ENCODE measurements at regions of chr6 and their contacts with region 1.

Region 1: GRCh38 chr6:134063966-134064445 is 11.6 kb upstream of the SLC2A12 start:
- DNase-seq: peak; percentile 75
- ATAC-seq: peak; percentile 96
- H3K4me3 ChIP-seq: no peak overlapping the region
- H3K4me3 Mint-ChIP-seq: no peak overlapping the region
- H3K27ac ChIP-seq: no peak overlapping the region
- H3K27ac Mint-ChIP-seq: no peak overlapping the region
- H3K4me1 ChIP-seq: no peaks in the 10 kb centered on the region
- H3K4me1 Mint-ChIP-seq: no peaks in the 10 kb centered on the region
- H3K27me3 ChIP-seq: no peaks in the 10 kb centered on the region
- H3K27me3 Mint-ChIP-seq: no peaks in the 10 kb centered on the region
- CTCF ChIP-seq: peak; percentile 77

Region 2: DNA sequence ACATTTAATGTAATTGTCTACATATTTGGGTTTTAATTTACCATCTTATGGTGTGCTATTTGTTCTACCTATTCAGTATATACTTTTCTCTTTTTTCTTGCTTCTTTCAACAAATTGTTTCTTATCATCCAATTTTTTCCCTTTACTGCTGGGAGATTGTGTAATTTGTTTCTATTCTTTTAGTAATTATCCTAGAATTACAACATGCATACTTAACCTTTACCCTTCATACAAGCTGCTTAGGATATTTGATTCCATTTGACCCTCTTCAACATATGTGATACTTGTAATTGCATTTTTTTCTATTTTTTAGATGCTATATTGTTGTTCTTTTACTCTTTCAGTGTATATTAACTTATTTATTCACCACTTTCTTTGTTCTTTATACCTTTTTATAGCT is 126.1 kb before region 1 on chr6:
- CTCF ChIA-PET with region 1: interaction called, 11 read pairs
- POLR2A ChIA-PET with region 1: no interaction called
- intact Hi-C with region 1: no loop called
- DNase-seq: no peak
- ATAC-seq: no peak
- H3K4me3 ChIP-seq: no peak overlapping the region
- H3K4me3 Mint-ChIP-seq: no peak overlapping the region
- H3K27ac ChIP-seq: no peak overlapping the region
- H3K27ac Mint-ChIP-seq: no peak overlapping the region
- H3K4me1 ChIP-seq: no peaks in the 10 kb centered on the region
- H3K4me1 Mint-ChIP-seq: no peaks in the 10 kb centered on the region
- H3K27me3 ChIP-seq: peaks cover 0 to 11% (median 2%) of the 10 kb centered on the region in 4 experiments
- H3K27me3 Mint-ChIP-seq: peaks cover 30% of the 10 kb centered on the region
- CTCF ChIP-seq: no peak

Region 3: DNA sequence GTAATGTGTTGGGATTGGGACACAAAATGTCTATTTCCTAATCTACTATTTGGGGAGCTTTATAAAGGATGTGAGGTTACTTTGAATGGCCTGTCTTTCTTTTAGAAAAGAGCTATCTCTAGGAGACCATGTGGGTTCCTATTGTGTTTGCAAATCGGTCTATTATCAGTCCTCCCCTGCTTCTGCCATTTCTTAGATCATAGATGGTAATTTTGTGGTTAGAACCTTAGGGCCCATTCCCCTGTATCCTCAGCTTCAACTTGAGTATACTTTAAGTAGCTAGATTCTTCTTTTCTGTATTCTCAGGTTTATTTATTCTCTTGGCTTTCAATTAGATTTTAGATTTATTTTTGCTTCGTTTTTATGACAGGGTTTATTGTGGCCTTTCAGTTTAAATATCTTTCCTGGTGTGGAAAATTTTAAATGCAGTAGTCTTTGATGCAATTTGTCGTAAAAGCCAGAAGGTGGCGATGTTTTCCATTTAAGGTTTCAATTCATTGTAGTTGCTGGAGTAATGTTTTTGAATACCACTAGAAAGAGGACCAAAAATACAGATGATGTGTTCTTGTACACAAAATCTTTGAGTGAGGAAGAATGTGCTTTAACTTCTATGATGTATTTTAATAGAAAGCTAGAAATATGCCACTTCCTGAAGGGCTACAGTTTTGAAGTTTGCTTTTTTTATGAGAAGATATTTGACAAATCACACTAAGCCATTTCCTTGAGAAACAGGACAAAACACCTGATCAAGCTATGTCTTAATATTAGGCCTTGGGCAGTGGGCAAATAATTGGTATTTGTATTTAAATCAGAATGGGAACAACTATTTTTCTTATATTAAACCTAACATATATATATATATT is 90.7 kb before region 1 on chr6:
- CTCF ChIA-PET with region 1: interaction called, 41 read pairs
- POLR2A ChIA-PET with region 1: no interaction called
- intact Hi-C with region 1: loop called (anchors 1 kb)
- DNase-seq: peak; percentile 63
- ATAC-seq: peak; percentile 43
- H3K4me3 ChIP-seq: no peak overlapping the region
- H3K4me3 Mint-ChIP-seq: no peak overlapping the region
- H3K27ac ChIP-seq: no peak overlapping the region
- H3K27ac Mint-ChIP-seq: no peak overlapping the region
- H3K4me1 ChIP-seq: no peaks in the 10 kb centered on the region
- H3K4me1 Mint-ChIP-seq: peaks cover 27% of the 10 kb centered on the region
- H3K27me3 ChIP-seq: no peaks in the 10 kb centered on the region
- H3K27me3 Mint-ChIP-seq: no peaks in the 10 kb centered on the region
- CTCF ChIP-seq: peak; percentile 86

Region 4: DNA sequence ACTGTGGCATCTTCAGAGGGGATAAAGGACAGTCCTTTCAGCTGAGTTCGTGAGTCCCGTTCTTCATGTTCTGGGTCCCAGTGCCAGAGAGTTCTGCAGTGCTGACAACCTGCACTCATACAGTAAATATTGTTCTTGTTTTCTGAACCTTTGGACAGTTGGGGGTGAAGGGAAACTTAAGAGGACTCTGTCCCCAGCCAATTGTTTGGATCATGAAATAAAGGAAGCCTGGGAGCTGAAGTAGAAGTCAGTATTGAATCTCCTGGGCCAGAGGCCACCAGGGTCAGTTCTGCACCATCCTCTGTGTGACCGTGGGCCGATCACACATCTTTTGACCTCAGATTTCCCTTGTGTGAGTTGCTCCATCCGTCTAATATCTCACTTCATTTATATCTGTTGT is 14.8 kb before region 1 on chr6:
- CTCF ChIA-PET with region 1: interaction called, 35 read pairs
- POLR2A ChIA-PET with region 1: interaction called, 3 read pairs
- intact Hi-C with region 1: no loop called
- DNase-seq: no peak
- ATAC-seq: no peak
- H3K4me3 ChIP-seq: no peak overlapping the region
- H3K4me3 Mint-ChIP-seq: no peak overlapping the region
- H3K27ac ChIP-seq: no peak overlapping the region
- H3K27ac Mint-ChIP-seq: no peak overlapping the region
- H3K4me1 ChIP-seq: peaks cover 8 to 10% of the 10 kb centered on the region in 2 donors
- H3K4me1 Mint-ChIP-seq: peaks cover 10% of the 10 kb centered on the region
- H3K27me3 ChIP-seq: no peaks in the 10 kb centered on the region
- H3K27me3 Mint-ChIP-seq: peaks cover 14% of the 10 kb centered on the region
- CTCF ChIP-seq: no peak

Region 5: GRCh38 chr6:134074151-134075055 is 10.4 kb after region 1 on chr6:
- CTCF ChIA-PET with region 1: interaction called, 14 read pairs
- POLR2A ChIA-PET with region 1: no interaction called
- intact Hi-C with region 1: no loop called
- DNase-seq: no peak
- ATAC-seq: no peak
- H3K4me3 ChIP-seq: no peak overlapping the region
- H3K4me3 Mint-ChIP-seq: no peak overlapping the region
- H3K27ac ChIP-seq: no peak overlapping the region
- H3K27ac Mint-ChIP-seq: no peak overlapping the region
- H3K4me1 ChIP-seq: peaks cover 2 to 5% of the 10 kb centered on the region in 2 donors
- H3K4me1 Mint-ChIP-seq: peaks cover 4% of the 10 kb centered on the region
- H3K27me3 ChIP-seq: no peaks in the 10 kb centered on the region
- H3K27me3 Mint-ChIP-seq: peaks cover 9% of the 10 kb centered on the region
- CTCF ChIP-seq: no peak

Region 6: GRCh38 chr6:134080171-134080795 is 16.3 kb after region 1 on chr6:
- CTCF ChIA-PET with region 1: interaction called, 22 read pairs
- POLR2A ChIA-PET with region 1: no interaction called
- intact Hi-C with region 1: no loop called
- DNase-seq: peak; percentile 36
- ATAC-seq: peak; percentile 54
- H3K4me3 ChIP-seq: peak overlapping the region in 2 of 5 experiments; percentile 17 to 23
- H3K4me3 Mint-ChIP-seq: peak overlapping the region; percentile 75
- H3K27ac ChIP-seq: peak overlapping the region in 1 of 2 donors; percentile 31
- H3K27ac Mint-ChIP-seq: no peak overlapping the region
- H3K4me1 ChIP-seq: peaks cover 39 to 41% of the 10 kb centered on the region in 2 donors
- H3K4me1 Mint-ChIP-seq: peaks cover 37% of the 10 kb centered on the region
- H3K27me3 ChIP-seq: peaks cover 0 to 7% (median 0%) of the 10 kb centered on the region in 4 experiments
- H3K27me3 Mint-ChIP-seq: peaks cover 3% of the 10 kb centered on the region
- CTCF ChIP-seq: no peak

Region 7: GRCh38 chr6:134090591-134090990 is 26.6 kb after region 1 on chr6:
- CTCF ChIA-PET with region 1: interaction called, 35 read pairs
- POLR2A ChIA-PET with region 1: no interaction called
- intact Hi-C with region 1: no loop called
- DNase-seq: no peak
- ATAC-seq: no peak
- H3K4me3 ChIP-seq: no peak overlapping the region
- H3K4me3 Mint-ChIP-seq: no peak overlapping the region
- H3K27ac ChIP-seq: no peak overlapping the region
- H3K27ac Mint-ChIP-seq: no peak overlapping the region
- H3K4me1 ChIP-seq: no peaks in the 10 kb centered on the region
- H3K4me1 Mint-ChIP-seq: peaks cover 4% of the 10 kb centered on the region
- H3K27me3 ChIP-seq: no peaks in the 10 kb centered on the region
- H3K27me3 Mint-ChIP-seq: peaks cover 9% of the 10 kb centered on the region
- CTCF ChIP-seq: no peak

Measured in B cell (primary cell).